HEK293 (cell line): ENCODE measurements at regions of chr20 and their contacts with region 1.

Region 1: DNA sequence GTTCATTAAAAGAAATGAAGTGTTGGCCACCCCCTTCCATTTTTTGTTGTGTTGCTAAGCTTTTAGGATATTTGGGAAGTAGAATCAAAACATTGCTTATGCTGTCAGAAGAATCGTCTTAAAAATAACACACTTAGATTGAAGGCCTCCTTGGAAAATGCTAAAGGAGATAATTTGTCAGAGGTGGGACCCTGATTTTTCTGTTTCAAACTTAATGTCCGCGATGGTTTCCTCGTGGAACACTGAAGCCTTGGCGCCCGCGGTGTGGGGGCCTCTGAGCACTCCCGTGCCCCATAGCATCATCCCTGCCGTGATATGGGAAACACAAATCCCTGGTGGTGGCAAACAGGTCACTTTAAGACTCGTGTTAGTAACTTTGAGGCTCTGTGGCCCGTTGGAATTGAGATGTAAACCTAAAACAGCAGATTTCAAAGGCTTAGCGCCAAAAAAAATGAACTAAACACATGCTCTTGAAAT is 9.1 kb upstream of the RBM38 start:
- H3K4me3 ChIP-seq: no peak overlapping the region
- H3K27ac ChIP-seq: no peak overlapping the region
- H3K4me1 ChIP-seq: no peaks in the 10 kb centered on the region
- CTCF ChIP-seq: no peak

Region 2: DNA sequence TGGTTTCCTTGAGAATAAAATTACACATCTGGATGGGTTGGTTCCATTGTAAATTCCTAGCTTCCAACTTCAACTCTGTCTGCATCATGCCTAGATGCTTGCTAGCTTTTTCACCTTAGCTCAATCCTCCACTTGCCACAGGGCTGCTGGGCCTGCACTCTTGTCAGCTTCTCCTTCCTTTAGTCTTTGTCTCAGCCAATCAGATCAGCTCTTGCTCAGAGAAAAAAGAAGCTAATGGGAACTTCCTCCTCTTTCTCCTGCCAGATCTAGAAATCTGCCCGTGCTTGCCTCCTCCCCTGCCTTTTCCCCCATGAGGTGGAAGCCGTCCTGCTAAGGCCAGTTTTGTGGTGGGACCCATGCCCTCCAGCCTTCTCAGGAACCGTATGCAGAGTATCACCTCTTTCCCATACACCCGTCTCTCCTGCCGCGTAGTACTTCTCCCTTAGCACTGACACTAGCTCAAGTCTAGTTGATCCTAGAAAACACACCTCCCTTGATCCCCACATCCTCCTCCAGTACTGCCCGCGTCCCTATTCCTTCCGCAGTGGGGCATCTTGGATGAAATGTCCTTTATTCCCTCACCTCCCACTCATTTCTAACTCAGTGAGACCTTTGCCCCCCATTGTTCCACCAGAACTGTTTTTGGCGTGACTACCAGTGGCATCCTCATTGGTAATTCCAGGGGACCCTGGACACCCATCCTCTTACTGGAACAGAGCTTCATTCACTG is 12.3 kb before region 1 on chr20:
- CTCF ChIA-PET with region 1: interaction called, 12 read pairs
- POLR2A ChIA-PET with region 1: no interaction called
- H3K4me3 ChIP-seq: no peak overlapping the region
- H3K27ac ChIP-seq: no peak overlapping the region
- H3K4me1 ChIP-seq: no peaks in the 10 kb centered on the region
- CTCF ChIP-seq: no peak

Region 3: GRCh38 chr20:57498425-57499400 is 116.6 kb after region 1 on chr20:
- CTCF ChIA-PET with region 1: interaction called, 26 read pairs
- POLR2A ChIA-PET with region 1: no interaction called
- H3K4me3 ChIP-seq: no peak overlapping the region
- H3K27ac ChIP-seq: no peak overlapping the region
- H3K4me1 ChIP-seq: peaks cover 3% of the 10 kb centered on the region; the same call in 1 of the 2 replicates
- CTCF ChIP-seq: peak; percentile 65